ENCODE measurements at regions of chr7 and their contacts with region 1.

Region 1: DNA sequence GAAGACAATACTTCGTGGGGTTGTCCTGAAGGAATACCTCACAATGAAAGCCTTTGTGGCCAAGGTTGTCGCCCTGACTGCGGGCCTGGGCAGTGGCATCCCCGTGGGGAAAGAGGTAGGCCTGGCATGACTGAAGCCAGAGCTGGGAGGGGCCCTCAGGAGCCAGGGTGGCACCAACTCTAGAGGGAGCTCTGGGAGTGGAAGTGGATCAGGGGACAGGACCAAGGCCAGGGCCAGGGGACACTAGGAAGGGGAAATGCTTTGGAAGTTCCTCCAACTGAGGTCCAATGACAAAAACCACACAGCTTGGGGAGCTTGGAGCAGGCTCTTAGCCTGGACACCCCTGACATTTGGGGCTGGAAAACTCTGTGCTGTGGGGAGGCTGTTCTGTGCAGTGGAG is 5.8 kb downstream of the CLCN1 start:
- DNase-seq: no peak

Region 2: DNA sequence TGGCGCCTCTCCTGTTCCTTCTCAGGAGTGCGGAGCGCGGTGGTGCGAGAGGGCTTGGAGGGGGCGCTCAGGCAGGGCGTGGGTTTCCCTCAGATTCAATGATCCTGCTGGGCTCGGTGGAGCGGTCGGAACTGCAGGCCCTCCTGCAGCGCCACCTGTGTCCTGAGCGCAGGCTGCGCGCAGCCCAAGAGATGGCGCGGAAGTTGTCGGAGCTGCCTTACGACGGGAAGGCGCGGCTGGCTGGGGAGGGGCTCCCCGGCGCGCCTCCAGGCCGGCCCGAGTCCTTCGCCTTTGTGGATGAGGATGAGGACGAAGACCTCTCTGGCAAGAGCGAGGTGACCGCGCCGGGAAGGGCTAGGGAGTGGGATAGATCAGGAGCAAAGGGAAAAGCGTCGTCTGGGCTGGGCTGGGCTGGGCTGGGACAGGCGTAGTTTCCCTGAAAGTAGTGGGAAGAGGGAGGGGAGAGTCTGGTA is 23.7 kb after region 1 on chr7:
- intact Hi-C with region 1: no loop called
- DNase-seq: no peak

Region 3: GRCh38 chr7:143380255-143380645 is 58.5 kb after region 1 on chr7:
- intact Hi-C with region 1: no loop called
- DNase-seq: peak; percentile 97

Region 4: DNA sequence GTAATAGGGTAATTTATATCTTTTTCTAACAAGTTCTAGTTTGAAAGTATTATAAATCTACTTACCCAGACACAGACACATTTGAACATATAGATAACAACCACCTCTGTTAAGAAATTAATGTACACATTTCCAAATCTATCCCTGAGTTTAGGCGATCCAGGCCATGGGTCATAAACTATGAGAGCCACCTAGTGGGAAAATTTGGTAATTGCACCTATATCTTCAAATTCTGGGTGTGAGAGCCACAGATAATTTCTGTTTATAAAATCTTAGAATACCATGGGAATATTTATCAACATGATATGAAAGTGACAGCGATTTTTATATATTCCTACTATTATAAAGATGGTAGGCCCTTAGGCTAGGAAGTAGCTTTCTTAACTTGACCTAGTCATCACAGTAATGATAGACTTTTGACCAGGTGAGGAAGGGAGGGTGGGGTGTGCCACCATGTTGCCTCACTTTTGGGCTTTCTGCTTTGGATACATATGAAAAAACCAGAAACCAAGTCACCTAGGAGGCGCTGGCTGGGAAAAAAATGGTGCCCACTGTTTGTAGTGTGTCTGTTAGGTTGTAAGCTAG is 94.9 kb after region 1 on chr7:
- intact Hi-C with region 1: loop called in 1 of 2 experiments (anchors 10 kb)
- DNase-seq: no peak